Uterus (tissue), 4 donors: ENCODE measurements at regions of chr2 and their contacts with region 1.

Region 1: GRCh38 chr2:61764035-61764800 is 89.6 kb downstream of the FAM161A start:
- DNase-seq: peak; percentile 97
- H3K4me3 ChIP-seq: peak overlapping the region; percentile 56 to 79
- H3K27ac ChIP-seq: peak overlapping the region; percentile 96 to 99
- H3K4me1 ChIP-seq: no peaks in the 10 kb centered on the region
- H3K27me3 ChIP-seq: no peaks in the 10 kb centered on the region
- CTCF ChIP-seq: no peak
- POLR2A ChIP-seq: peak; percentile 85 to 93

Region 2: GRCh38 chr2:61694312-61695274 is 69.6 kb before region 1 on chr2:
- intact Hi-C with region 1: loop called (anchors 10 kb)
- DNase-seq: peak; percentile 95 to 96
- H3K4me3 ChIP-seq: peak overlapping the region; percentile 64 to 84
- H3K27ac ChIP-seq: peak overlapping the region; percentile 78 to 86
- H3K4me1 ChIP-seq: no peaks in the 10 kb centered on the region
- H3K27me3 ChIP-seq: no peaks in the 10 kb centered on the region
- CTCF ChIP-seq: peak; percentile 45 to 64 (median 54)
- POLR2A ChIP-seq: peak in 1 of 2 donors; percentile 60

Region 3: GRCh38 chr2:61898810-61899209 is 134.6 kb after region 1 on chr2:
- intact Hi-C with region 1: no loop called
- DNase-seq: no peak
- H3K4me3 ChIP-seq: no peak overlapping the region
- H3K27ac ChIP-seq: no peak overlapping the region
- H3K4me1 ChIP-seq: no peaks in the 10 kb centered on the region
- H3K27me3 ChIP-seq: no peaks in the 10 kb centered on the region
- CTCF ChIP-seq: no peak
- POLR2A ChIP-seq: no peak

Region 4: DNA sequence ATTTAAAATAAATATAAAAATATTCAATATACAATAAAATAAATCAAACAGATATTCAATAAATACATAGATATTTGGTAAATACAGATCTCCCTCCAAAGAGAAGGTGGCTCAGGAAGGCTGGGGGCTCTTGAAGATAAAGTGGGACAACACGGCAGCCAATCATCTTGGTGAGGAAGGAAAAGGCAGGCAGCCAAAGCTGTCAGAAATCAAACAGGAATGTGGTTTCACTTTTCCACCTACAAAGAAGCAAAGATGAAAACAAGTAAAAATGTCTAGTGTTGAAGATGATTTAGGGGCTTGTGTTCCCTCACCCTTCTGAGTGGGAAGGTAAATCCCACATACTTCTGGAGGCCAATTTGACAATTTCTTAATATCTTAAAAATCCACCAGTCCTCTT is 517.4 kb after region 1 on chr2:
- intact Hi-C with region 1: no loop called
- DNase-seq: no peak
- H3K4me3 ChIP-seq: no peak overlapping the region
- H3K27ac ChIP-seq: peak overlapping the region in 1 of 2 donors; percentile 13
- H3K4me1 ChIP-seq: no peaks in the 10 kb centered on the region
- H3K27me3 ChIP-seq: no peaks in the 10 kb centered on the region
- CTCF ChIP-seq: no peak
- POLR2A ChIP-seq: no peak